CD4-positive, alpha-beta T cell (primary cell): ENCODE measurements at regions of chr21 and their contacts with region 1.

Region 1: DNA sequence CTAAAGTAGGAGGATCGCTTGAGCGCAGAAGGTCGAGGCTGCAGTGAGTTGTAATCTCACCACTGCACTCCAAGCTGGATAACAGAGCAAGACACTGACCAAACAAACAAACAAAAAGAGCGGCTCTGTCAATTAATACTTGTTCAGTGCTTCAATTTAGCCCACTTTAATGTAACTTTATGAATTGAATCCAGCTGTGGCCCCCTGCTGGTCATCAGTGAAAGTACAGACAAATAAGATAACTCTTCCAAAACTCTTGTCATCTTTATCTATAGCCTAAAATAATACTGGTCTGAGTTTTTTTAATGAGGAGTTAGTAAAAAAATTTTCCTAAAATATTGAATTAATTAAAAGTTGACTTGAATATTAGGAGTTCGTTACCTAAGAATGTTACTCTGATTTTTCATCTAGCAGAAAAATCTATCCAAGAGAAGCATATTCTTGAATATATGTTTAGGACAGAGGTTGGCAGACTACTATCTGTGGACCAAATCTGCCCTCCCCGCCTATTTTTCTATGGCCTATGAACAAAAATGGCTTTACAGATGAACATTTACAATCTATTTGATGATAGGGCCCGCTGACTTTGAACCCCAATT is 26.1 kb downstream of the ATP5PF start:
- DNase-seq: peak; percentile 5 to 76 (median 30)
- ATAC-seq: no peak
- H3K4me3 ChIP-seq: no peak overlapping the region
- H3K4me3 Mint-ChIP-seq: no peak overlapping the region
- H3K27ac ChIP-seq: no peak overlapping the region
- H3K27ac Mint-ChIP-seq: no peak overlapping the region
- H3K4me1 ChIP-seq: no peaks in the 10 kb centered on the region
- H3K4me1 Mint-ChIP-seq: no peaks in the 10 kb centered on the region
- H3K27me3 ChIP-seq: no peaks in the 10 kb centered on the region
- H3K27me3 Mint-ChIP-seq: no peaks in the 10 kb centered on the region
- CTCF ChIP-seq: peak; percentile 96

Region 2: GRCh38 chr21:25421327-25422028 is 287.1 kb before region 1 on chr21:
- CTCF ChIA-PET with region 1: no interaction called
- POLR2A ChIA-PET with region 1: no interaction called
- intact Hi-C with region 1: loop called (anchors 1 to 5 kb)
- DNase-seq: peak in 13 of 14 experiments; percentile 14 to 84 (median 39)
- ATAC-seq: peak; percentile 94
- H3K4me3 ChIP-seq: no peak overlapping the region
- H3K4me3 Mint-ChIP-seq: no peak overlapping the region
- H3K27ac ChIP-seq: no peak overlapping the region
- H3K27ac Mint-ChIP-seq: peak overlapping the region; percentile 16
- H3K4me1 ChIP-seq: peaks cover 4% of the 10 kb centered on the region
- H3K4me1 Mint-ChIP-seq: peaks cover 13% of the 10 kb centered on the region
- H3K27me3 ChIP-seq: no peaks in the 10 kb centered on the region
- H3K27me3 Mint-ChIP-seq: no peaks in the 10 kb centered on the region
- CTCF ChIP-seq: peak; percentile 62

Region 3: GRCh38 chr21:25837533-25838265 is 129.1 kb after region 1 on chr21:
- CTCF ChIA-PET with region 1: no interaction called
- POLR2A ChIA-PET with region 1: no interaction called
- intact Hi-C with region 1: no loop called
- DNase-seq: no peak
- ATAC-seq: no peak
- H3K4me3 ChIP-seq: no peak overlapping the region
- H3K4me3 Mint-ChIP-seq: no peak overlapping the region
- H3K27ac ChIP-seq: no peak overlapping the region
- H3K27ac Mint-ChIP-seq: no peak overlapping the region
- H3K4me1 ChIP-seq: no peaks in the 10 kb centered on the region
- H3K4me1 Mint-ChIP-seq: no peaks in the 10 kb centered on the region
- H3K27me3 ChIP-seq: peaks cover 2 to 4% of the 10 kb centered on the region in 2 experiments
- H3K27me3 Mint-ChIP-seq: peaks cover 12% of the 10 kb centered on the region
- CTCF ChIP-seq: no peak